H1 (cell line): ENCODE measurements at regions of chr9 and their contacts with region 1.

Region 1: DNA sequence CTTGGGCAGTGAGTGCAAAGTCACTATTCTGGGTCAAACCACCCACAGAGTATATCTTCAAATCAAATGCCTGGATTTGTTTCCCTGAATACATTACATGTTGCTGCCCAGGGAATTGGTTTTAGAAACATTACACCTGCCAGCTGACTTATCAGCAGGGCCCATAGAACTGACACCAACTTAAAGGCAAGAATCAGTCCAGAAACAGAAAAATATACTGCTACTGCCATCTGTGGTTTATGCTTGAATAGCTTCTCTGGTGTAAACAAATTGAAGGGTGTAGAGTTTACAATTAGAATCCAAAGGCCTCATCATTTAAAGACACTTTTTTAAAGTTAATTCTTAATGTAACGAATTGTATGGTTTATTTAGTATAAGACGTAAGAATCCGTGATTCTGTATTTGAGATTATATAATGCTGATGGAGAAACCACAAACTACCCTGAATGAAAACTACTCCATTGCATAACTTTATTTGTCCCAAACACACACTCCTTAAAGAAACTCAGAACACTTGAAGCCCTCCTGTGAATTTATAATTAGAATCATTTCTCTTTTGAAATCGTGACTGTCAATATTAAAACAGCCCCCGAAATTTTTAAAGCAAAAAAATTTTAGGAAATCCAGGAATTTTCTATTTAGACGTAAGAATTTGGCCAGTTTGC is 6.2 kb downstream of the NR6A1 start:
- DNase-seq: no peak
- H3K4me3 ChIP-seq: peak overlapping the region in 1 of 4 experiments; percentile 86; a peak in 2 of 8 replicates
- H3K27ac ChIP-seq: no peak overlapping the region
- H3K4me1 ChIP-seq: peaks cover 4 to 40% (median 20%) of the 10 kb centered on the region in 4 experiments; a peak in 6 of 7 replicates
- H3K27me3 ChIP-seq: no peaks in the 10 kb centered on the region
- CTCF ChIP-seq: peak in 2 of 3 experiments; percentile 23 to 44; a peak in 2 of 4 replicates
- EP300 ChIP-seq: no peak
- POLR2A ChIP-seq: no peak
- RAD21 ChIP-seq: peak; percentile 40 to 51

Region 2: DNA sequence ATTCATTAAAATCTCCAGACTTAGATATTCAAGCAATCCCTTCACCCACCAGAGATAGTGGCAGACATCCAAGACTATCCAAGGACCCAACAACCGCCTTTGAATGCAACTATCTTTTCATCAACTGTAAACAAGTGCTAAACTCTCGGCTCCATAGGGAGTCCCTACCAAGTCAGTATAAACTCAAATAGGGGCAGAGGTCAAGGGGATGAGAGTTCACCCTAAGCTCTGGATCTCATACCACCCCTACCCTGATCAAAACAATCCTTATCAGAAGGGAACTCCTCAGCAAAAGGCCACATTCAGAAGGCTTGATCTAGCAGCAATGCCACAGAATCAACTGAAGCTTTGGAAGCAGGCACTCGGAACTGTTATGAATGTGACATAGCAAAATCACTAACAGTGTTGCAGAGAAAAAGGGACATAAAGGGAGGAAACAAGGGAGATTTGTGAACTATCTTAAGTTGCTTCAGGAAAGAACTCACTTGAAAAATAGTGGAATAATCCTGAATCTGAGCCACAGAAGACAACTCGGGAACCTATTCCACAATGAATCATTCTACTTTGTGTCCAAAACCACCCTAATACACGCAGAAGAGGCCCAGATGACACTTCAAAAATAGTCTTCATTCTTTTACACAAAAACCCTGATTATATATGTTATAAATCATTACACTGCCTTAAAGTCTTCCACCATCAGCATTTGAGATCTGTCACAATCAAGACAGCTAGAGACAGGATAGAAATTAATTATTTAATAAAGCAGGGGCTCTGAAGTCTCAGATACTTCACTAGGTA is 43.6 kb before region 1 on chr9:
- CTCF ChIA-PET with region 1: interaction called, 10 read pairs
- POLR2A ChIA-PET with region 1: interaction called, 5 read pairs
- DNase-seq: no peak
- H3K4me3 ChIP-seq: no peak overlapping the region
- H3K27ac ChIP-seq: no peak overlapping the region
- H3K4me1 ChIP-seq: peaks cover 0 to 5% (median 1%) of the 10 kb centered on the region in 4 experiments; a peak in 2 of 7 replicates
- H3K27me3 ChIP-seq: no peaks in the 10 kb centered on the region
- CTCF ChIP-seq: no peak
- EP300 ChIP-seq: no peak
- POLR2A ChIP-seq: no peak
- RAD21 ChIP-seq: no peak

Region 3: GRCh38 chr9:124735121-124735520 is 29.8 kb before region 1 on chr9:
- CTCF ChIA-PET with region 1: interaction called, 20 read pairs
- POLR2A ChIA-PET with region 1: no interaction called
- DNase-seq: no peak
- H3K4me3 ChIP-seq: no peak overlapping the region
- H3K27ac ChIP-seq: 0 out of 2 replicates have a peak overlapping the region, but pooled peaks have one; percentile 12
- H3K4me1 ChIP-seq: peaks cover 6 to 19% (median 9%) of the 10 kb centered on the region in 4 experiments; a peak in 6 of 7 replicates
- H3K27me3 ChIP-seq: no peaks in the 10 kb centered on the region
- CTCF ChIP-seq: no peak
- EP300 ChIP-seq: no peak
- POLR2A ChIP-seq: no peak
- RAD21 ChIP-seq: no peak

Region 4: DNA sequence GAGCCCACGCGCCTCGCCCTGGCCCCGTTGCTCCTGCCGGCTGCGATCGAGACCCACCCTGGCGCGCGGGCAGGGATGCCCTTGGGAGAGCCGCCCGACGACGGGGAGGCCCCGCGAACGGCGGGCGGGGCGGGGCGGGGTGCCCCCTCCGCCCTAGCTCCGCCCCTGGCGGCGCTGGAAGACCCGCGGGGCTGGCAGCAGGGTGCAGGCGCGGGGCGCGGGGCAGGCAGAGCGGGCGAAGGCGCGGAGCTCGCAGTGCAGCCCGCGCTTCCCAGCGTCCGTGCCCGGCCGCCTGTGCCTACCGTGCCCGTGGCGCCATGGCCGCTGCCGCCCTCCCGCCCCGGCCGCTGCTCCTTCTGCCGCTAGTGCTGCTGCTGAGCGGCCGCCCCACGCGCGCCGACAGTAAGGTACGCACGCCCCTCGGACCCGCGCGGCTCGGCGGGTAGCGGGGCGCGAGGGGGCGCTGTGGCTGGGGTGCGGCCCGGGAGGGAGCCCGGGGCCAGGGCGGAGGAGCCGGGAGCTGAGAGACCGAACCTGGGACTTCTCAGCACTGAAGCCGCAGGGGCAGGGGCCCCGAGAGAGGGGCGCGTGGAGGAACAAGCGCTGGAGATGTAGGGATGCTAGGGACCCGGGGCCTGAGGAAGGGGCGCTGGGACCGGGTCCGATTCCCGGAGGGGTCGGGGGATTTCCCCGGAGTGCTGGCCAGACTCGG is 12.2 kb after region 1 on chr9 and contains the start of gene OLFML2A:
- CTCF ChIA-PET with region 1: interaction called, 18 read pairs
- POLR2A ChIA-PET with region 1: interaction called, 50 read pairs
- DNase-seq: peak in 1 of 2 experiments; percentile 83
- H3K4me3 ChIP-seq: peak within 1 kb of the TSS; percentile 29 to 73 (median 52)
- H3K27ac ChIP-seq: no peak within 1 kb of the TSS
- H3K4me1 ChIP-seq: peaks cover 12 to 22% (median 17%) of the 10 kb centered on the region in 4 experiments
- H3K27me3 ChIP-seq: peaks cover 0 to 10% (median 6%) of the 10 kb centered on the region in 4 experiments; a peak in 6 of 7 replicates
- CTCF ChIP-seq: peak; percentile 61 to 73 (median 61)
- EP300 ChIP-seq: no peak
- POLR2A ChIP-seq: peak in 1 of 2 experiments; percentile 28; a peak in 1 of 3 replicates
- RAD21 ChIP-seq: peak; percentile 16 to 47; a peak in 2 of 4 replicates
- total RNA-seq, gene OLFML2A: 11.4 and 11.5 TPM in 2 replicates